ENCODE measurements at regions of chrX and their contacts with region 1.

Region 1: GRCh38 chrX:109782994-109783700 is 50.1 kb upstream of the ACSL4 start:
- DNase-seq: no peak
- H3K4me3 ChIP-seq: no peak overlapping the region
- H3K27ac ChIP-seq: peak overlapping the region; percentile 56 to 59
- H3K4me1 ChIP-seq: no peaks in the 10 kb centered on the region
- H3K27me3 ChIP-seq: no peaks in the 10 kb centered on the region
- CTCF ChIP-seq: no peak

Region 2: DNA sequence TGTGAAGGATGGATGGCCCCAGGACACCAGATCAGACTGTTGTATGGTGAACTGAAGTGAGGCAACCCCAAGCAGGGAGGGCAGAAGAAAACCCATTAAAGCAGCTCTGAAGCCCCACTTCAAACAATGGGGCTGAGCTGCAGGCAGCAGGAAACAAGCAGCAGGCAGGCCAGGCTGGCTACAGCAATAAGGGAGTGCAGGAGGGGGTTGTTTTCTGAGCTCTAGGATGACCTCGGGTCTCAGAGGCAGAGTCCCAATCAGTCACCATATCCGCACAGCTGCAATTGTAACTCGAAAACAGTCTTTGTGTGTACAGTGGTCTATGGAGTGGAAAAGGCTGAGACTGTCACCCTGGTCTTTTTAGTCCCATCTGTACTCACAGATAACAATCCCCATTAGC is 1435.3 kb before region 1 on chrX:
- intact Hi-C with region 1: no loop called
- DNase-seq: no peak
- H3K4me3 ChIP-seq: no peak overlapping the region
- H3K27ac ChIP-seq: no peak overlapping the region
- H3K4me1 ChIP-seq: no peaks in the 10 kb centered on the region
- H3K27me3 ChIP-seq: no peaks in the 10 kb centered on the region
- CTCF ChIP-seq: no peak

Region 3: GRCh38 chrX:109155161-109155560 is 628.0 kb before region 1 on chrX:
- intact Hi-C with region 1: no loop called
- DNase-seq: no peak
- H3K4me3 ChIP-seq: no peak overlapping the region
- H3K27ac ChIP-seq: no peak overlapping the region
- H3K4me1 ChIP-seq: no peaks in the 10 kb centered on the region
- H3K27me3 ChIP-seq: no peaks in the 10 kb centered on the region
- CTCF ChIP-seq: no peak

Region 4: DNA sequence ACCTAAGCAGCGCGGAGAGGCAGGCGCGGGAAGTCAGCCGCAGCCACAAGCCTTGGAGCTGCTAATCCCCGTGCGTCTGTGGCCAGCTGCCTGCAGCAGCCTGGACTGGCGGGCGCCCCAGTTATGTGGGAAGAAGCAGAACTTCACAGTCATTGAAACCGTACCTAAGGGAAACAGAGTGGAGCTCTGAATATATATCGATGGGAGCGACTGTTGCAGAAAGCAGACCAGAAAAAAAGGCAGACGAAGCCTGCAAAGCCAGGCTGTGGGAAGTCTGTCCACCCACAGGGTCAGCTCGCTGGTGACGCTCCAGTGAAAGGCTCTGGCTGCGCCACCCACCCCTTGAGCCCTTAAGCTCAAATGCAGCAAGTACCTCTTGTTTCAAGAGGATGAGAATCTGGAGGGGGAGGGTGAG is 182.9 kb before region 1 on chrX:
- intact Hi-C with region 1: no loop called
- DNase-seq: no peak
- H3K4me3 ChIP-seq: no peak overlapping the region
- H3K27ac ChIP-seq: no peak overlapping the region
- H3K4me1 ChIP-seq: no peaks in the 10 kb centered on the region
- H3K27me3 ChIP-seq: no peaks in the 10 kb centered on the region
- CTCF ChIP-seq: no peak

Region 5: GRCh38 chrX:109856974-109857373 is 73.8 kb after region 1 on chrX:
- intact Hi-C with region 1: loop called (anchors 5 kb)
- DNase-seq: no peak
- H3K4me3 ChIP-seq: peak overlapping the region in 1 of 2 donors; percentile 32
- H3K27ac ChIP-seq: no peak overlapping the region
- H3K4me1 ChIP-seq: peaks cover 0 to 3% of the 10 kb centered on the region in 2 donors
- H3K27me3 ChIP-seq: no peaks in the 10 kb centered on the region
- CTCF ChIP-seq: peak; percentile 62 to 86 (median 81)

Measured in ascending aorta (tissue), 2 donors.